Panc1 (cell line): ENCODE measurements at regions of chr15 and their contacts with region 1.

Region 1: GRCh38 chr15:75647370-75648155 is at the start of gene SNX33:
- DNase-seq: no peak
- ATAC-seq: peak; percentile 87
- H3K4me3 ChIP-seq: peak within 1 kb of the TSS; percentile 76 to 80
- H3K27ac ChIP-seq: peak within 1 kb of the TSS; percentile 81
- H3K4me1 ChIP-seq: peaks cover 31% of the 10 kb centered on the region
- H3K27me3 ChIP-seq: no peaks in the 10 kb centered on the region
- CTCF ChIP-seq: no peak; the same call in 1 of the 2 replicates
- total RNA-seq, gene SNX33: 17.0 TPM

Region 2: DNA sequence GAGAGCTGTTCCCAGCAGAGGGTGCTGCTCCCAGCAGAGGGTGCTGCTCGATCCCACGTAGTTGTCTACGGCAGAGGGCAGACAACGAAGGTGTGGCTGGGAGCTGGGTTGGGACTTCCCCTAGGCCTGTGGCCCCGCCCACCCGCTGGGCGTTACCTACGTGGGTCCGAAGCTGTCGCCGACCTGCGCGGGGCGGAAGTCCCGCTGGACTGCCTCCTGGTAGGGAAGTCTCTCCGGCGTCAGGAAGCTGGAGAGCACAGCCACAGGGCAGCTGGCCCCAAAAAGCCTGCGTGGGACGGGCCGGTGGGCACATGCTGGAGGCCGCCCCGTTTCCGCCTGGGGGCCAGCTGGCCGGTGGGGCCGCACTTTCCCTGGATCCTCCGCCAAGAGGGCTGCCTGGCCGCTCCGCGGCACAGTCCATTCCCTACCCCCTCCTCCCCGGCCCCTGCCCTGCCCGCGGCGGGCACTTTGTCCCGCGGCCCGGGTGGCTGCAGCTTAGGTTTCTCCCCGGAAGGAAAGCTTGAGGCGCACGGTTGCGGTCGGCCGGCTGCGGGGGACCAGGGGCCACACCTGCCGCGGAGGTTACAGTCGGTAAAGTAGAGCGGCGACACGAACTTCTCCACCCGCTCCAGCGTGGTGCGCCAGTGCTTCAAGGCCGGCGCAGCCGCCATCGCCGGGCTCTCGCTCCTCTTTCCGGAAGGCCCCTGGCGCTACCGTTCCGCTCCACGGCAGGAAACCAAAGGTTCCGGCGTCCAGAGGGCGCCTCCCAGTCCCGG is 279.5 kb before region 1 on chr15 and contains the start of gene MAN2C1:
- CTCF ChIA-PET with region 1: interaction called, 10 read pairs
- POLR2A ChIA-PET with region 1: no interaction called
- in situ Hi-C with region 1: no loop called
- intact Hi-C with region 1: no loop called
- DNase-seq: peak; percentile 84
- ATAC-seq: peak; percentile 96
- H3K4me3 ChIP-seq: peak within 1 kb of the TSS; percentile 74 to 91
- H3K27ac ChIP-seq: peak within 1 kb of the TSS; percentile 93
- H3K4me1 ChIP-seq: peaks cover 15% of the 10 kb centered on the region
- H3K27me3 ChIP-seq: no peaks in the 10 kb centered on the region
- CTCF ChIP-seq: peak; percentile 93
- total RNA-seq, gene MAN2C1: 127 TPM

Region 3: GRCh38 chr15:75625542-75626347 is 21.8 kb before region 1 on chr15 and contains the start of gene SNUPN:
- CTCF ChIA-PET with region 1: interaction called, 14 read pairs
- POLR2A ChIA-PET with region 1: interaction called, 4 read pairs
- in situ Hi-C with region 1: no loop called
- intact Hi-C with region 1: no loop called
- DNase-seq: peak; percentile 69
- ATAC-seq: peak; percentile 97
- H3K4me3 ChIP-seq: peak within 1 kb of the TSS; percentile 86 to 91
- H3K27ac ChIP-seq: peak within 1 kb of the TSS; percentile 100
- H3K4me1 ChIP-seq: peaks cover 18% of the 10 kb centered on the region
- H3K27me3 ChIP-seq: no peaks in the 10 kb centered on the region
- CTCF ChIP-seq: no peak
- total RNA-seq, gene SNUPN: 52.1 TPM